Heart right ventricle (tissue), 16 donors: ENCODE measurements at regions of chr15 and their contacts with region 1.

Region 1: GRCh38 chr15:98927022-98927421 is 80.6 kb downstream of the PGPEP1L start:
- DNase-seq: no peak
- ATAC-seq: peak in 7 of 8 donors; percentile 31 to 68 (median 39)
- H3K4me3 ChIP-seq: no peak overlapping the region
- H3K27ac ChIP-seq: peak overlapping the region in 7 of 10 donors; percentile 25 to 78 (median 40)
- H3K4me1 ChIP-seq: peaks cover 0 to 37% (median 22%) of the 10 kb centered on the region in 9 donors
- H3K27me3 ChIP-seq: no peaks in the 10 kb centered on the region
- CTCF ChIP-seq: no peak

Region 2: DNA sequence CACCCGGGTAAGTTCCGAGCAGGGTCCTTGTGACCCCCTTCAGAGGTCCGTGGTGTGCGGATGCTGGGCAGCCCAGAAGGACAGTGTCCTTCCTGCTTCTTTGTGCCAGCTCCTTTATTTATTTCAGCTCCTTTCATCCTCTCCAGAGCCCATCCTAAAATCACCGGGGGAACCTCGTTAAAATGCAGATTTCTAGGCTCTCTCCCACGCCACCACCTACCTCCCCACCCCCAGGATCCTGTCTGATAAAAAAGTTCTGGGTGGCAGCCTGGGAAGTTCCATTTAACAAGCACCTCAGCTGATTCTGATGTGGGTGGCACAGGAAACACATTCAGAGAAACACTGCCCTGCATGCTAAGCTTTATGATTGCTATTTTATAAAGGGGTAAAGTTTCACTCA is 291.2 kb before region 1 on chr15:
- intact Hi-C with region 1: loop called in 1 of 10 experiments (anchors 5 kb)
- DNase-seq: no peak
- ATAC-seq: no peak
- H3K4me3 ChIP-seq: no peak overlapping the region
- H3K27ac ChIP-seq: no peak overlapping the region
- H3K4me1 ChIP-seq: no peaks in the 10 kb centered on the region
- H3K27me3 ChIP-seq: peaks cover 0 to 66% (median 33%) of the 10 kb centered on the region in 7 donors
- CTCF ChIP-seq: no peak